ENCODE measurements at regions of chr20 and their contacts with region 1.

Region 1: GRCh38 chr20:34768096-34768495 is 57.4 kb downstream of the NCOA6 start:
- DNase-seq: no peak
- H3K4me3 ChIP-seq: no peak overlapping the region
- H3K27ac ChIP-seq: no peak overlapping the region
- H3K4me1 ChIP-seq: no peaks in the 10 kb centered on the region
- H3K27me3 ChIP-seq: no peaks in the 10 kb centered on the region
- CTCF ChIP-seq: no peak

Region 2: GRCh38 chr20:34579191-34579978 is 188.7 kb before region 1 on chr20:
- intact Hi-C with region 1: loop called (anchors 1 kb)
- DNase-seq: peak in 1 of 2 donors; percentile 80
- H3K4me3 ChIP-seq: no peak overlapping the region
- H3K27ac ChIP-seq: no peak overlapping the region
- H3K4me1 ChIP-seq: peaks cover 0 to 22% of the 10 kb centered on the region in 2 donors
- H3K27me3 ChIP-seq: no peaks in the 10 kb centered on the region
- CTCF ChIP-seq: peak; percentile 56 to 79 (median 78)